ENCODE measurements at regions of chr15 and their contacts with region 1.

Region 1: DNA sequence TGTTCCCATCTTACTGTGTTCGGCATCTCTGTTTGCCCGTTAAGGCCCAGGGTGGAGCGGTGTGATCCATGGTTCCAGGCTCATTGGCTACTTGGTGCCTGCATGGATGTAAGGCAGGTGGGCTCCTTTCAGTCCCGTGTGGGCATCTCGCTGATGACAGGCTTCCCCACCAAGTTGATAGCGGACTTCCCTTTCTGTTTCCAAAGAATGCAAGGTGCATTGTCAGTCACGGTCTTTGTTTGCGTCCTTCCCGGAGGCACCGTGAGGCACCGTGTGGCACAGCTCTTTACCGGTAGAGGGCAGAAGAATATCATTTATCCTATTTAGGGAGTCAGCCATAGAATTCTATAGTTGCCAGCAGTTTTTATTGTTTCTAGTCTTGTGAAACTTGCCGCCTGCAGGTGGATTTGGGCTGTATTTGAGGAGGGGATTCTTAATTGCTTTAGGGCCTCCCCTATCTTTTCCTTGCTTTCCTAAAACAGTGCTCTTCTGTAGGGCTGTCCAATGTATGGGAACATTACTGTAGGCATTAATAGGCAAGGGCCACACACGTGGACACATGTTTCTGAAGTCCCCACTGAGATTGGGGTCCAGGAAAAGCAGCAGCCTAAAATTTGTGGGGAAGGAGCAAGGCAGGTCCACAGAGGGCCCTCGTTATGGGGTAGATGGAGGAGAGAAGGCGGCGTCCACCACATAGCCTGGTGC is 244.1 kb downstream of the SLCO3A1 start:
- DNase-seq: peak; percentile 23
- H3K4me3 ChIP-seq: no peak overlapping the region
- H3K27ac ChIP-seq: no peak overlapping the region
- H3K4me1 ChIP-seq: no peaks in the 10 kb centered on the region
- H3K27me3 ChIP-seq: no peaks in the 10 kb centered on the region
- CTCF ChIP-seq: peak; percentile 80 to 81

Region 2: GRCh38 chr15:92205255-92205739 is 107.7 kb after region 1 on chr15:
- CTCF ChIA-PET with region 1: no interaction called
- dilution Hi-C with region 1: no loop called
- in situ Hi-C with region 1: loop called (anchors 10 to 25 kb)
- intact Hi-C with region 1: loop called (anchors 1 kb)
- DNase-seq: no peak
- H3K4me3 ChIP-seq: no peak overlapping the region
- H3K27ac ChIP-seq: no peak overlapping the region
- H3K4me1 ChIP-seq: no peaks in the 10 kb centered on the region
- H3K27me3 ChIP-seq: no peaks in the 10 kb centered on the region
- CTCF ChIP-seq: peak in 1 of 2 donors; percentile 46

Region 3: DNA sequence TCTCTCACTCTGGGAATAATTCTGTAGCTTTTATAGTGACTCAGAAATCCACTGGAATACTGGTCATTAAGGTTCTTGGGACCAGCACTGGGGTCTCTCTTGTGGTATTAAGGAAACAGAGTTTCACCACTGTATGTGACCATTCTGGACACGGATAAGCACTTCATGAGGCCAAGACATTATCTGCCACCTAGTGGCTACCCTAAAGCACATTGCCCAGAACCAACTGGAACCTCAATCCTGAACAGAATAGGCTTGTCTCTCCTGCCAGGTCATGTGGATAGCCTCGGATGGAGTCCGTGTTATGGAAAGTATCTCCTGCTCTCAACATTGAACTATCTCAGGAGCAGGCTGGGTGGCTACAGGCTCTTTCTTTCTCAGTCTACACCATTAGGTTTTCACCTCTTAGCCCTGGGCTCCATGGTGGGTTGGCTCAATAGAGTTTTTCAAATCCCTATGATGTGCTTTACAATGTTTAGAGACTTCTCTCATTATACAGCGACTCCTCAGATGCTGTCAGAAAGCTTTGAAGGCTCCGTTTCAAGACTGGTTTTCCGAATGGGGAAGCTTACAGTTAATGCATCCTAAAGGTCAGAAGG is 128.5 kb after region 1 on chr15:
- CTCF ChIA-PET with region 1: no interaction called
- dilution Hi-C with region 1: no loop called
- in situ Hi-C with region 1: loop called in 1 of 2 experiments (anchors 25 kb)
- intact Hi-C with region 1: loop called (anchors 1 kb)
- DNase-seq: peak; percentile 37
- H3K4me3 ChIP-seq: no peak overlapping the region
- H3K27ac ChIP-seq: no peak overlapping the region
- H3K4me1 ChIP-seq: no peaks in the 10 kb centered on the region
- H3K27me3 ChIP-seq: no peaks in the 10 kb centered on the region
- CTCF ChIP-seq: peak; percentile 53 to 72

Region 4: GRCh38 chr15:92383519-92384326 is 286.1 kb after region 1 on chr15:
- CTCF ChIA-PET with region 1: no interaction called
- dilution Hi-C with region 1: no loop called
- in situ Hi-C with region 1: no loop called
- intact Hi-C with region 1: loop called (anchors 5 kb)
- DNase-seq: no peak
- H3K4me3 ChIP-seq: no peak overlapping the region
- H3K27ac ChIP-seq: no peak overlapping the region
- H3K4me1 ChIP-seq: peaks cover 27% of the 10 kb centered on the region
- H3K27me3 ChIP-seq: peaks cover 6% of the 10 kb centered on the region
- CTCF ChIP-seq: peak; percentile 38 to 40

Region 5: DNA sequence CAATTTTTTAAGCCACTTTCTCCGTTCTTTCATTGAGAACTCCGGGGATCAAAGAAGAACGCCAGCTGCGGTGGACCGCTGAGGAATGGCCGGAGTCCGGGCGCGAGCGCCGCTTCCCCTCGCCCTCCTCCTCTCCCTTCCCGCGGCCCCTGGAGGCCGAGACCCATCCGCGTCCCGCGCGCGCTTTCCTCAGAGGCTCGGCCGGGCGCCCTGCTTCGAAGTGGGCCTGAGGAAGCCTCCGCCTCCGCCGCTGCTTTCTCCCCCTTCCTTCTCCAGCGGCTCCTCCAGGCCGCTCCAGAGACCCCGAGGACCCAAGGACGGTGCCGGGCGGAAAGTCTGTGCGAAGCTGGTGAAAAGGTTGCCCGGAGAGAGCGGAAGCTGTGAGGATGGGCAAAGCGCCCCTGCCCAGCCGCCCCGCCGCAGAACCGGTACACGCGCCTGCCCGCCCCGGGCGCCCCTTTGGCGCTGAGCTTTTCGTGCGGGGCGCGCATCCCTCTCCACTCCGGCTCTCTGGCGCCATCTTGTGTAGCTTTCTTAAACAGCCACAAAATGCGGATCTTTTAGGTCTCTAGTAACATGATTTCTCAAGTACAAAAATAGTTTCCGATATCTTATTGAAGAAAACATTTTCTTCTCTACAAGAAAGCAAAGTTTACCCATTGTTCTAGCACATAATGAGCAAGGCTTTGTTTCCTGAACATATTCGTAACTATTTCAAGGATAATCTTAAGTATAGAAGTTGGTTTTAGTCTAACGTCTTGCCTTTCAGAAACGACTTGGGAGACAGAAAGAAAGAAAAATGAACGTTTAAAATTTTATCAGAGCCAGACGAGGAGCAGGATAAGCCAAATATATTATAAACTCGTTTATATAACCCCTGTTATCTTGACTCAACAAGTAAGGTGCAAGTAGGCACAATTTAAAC is 617.1 kb after region 1 on chr15:
- CTCF ChIA-PET with region 1: no interaction called
- dilution Hi-C with region 1: no loop called
- in situ Hi-C with region 1: loop called in 1 of 2 experiments (anchors 25 kb)
- intact Hi-C with region 1: loop called (anchors 1 kb)
- DNase-seq: peak; percentile 51
- H3K4me3 ChIP-seq: peak overlapping the region; percentile 5 to 50 (median 50)
- H3K27ac ChIP-seq: no peak overlapping the region
- H3K4me1 ChIP-seq: peaks cover 11% of the 10 kb centered on the region
- H3K27me3 ChIP-seq: no peaks in the 10 kb centered on the region
- CTCF ChIP-seq: peak; percentile 85 to 90